HepG2 (cell line): ENCODE measurements at regions of chr14 and their contacts with region 1.

Region 1: DNA sequence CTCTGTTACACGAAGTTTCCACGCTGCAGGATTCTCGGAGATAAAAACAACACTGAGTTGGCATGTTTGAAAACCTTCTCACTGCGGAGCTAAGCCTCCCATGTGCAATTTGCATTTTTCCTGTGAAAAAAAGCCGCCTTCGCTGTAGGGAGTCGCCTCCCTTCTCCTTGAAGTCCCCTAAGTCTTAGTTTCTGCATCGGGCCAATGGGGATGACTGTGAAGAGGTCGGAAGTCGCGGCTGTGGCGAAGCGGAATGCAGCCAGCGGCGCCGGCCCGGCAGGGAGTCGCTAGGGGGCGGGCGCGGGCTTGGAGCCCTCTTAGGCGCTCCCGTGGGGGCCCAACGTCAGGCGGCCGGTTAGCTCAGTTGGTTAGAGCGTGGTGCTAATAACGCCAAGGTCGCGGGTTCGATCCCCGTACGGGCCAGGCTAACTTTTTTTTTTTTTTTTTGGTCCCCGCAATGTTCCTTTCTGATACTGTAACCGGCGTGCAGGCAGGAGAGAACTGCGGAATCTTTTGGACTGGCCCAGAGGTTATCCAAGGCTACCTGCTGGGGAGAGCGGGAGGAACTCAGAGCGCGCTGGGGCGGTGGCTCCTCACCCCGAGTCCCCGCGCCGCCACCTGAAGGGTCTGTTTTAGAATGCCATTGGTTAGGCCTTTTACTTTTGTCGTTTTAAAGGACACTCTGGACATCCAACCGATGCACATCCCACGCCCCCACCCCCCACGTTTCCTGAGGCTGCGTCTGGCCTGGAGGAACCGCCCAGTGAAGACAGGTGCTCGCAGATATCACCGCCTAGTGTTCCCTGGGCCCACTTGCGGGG is 2.6 kb upstream of the ZNF839 start:
- DNase-seq: peak; percentile 83
- ATAC-seq: peak; percentile 52
- H3K4me3 ChIP-seq: peak overlapping the region; percentile 77 to 97 (median 86)
- H3K27ac ChIP-seq: peak overlapping the region; percentile 80
- H3K4me1 ChIP-seq: peaks cover 55% of the 10 kb centered on the region
- H3K27me3 ChIP-seq: no peaks in the 10 kb centered on the region; a peak in 1 of 5 replicates
- CTCF ChIP-seq: peak; percentile 93
- EP300 ChIP-seq: peak; percentile 18 to 54; a peak in 2 of 4 replicates
- POLR2A ChIP-seq: peak in 1 of 2 experiments; percentile 25; a peak in 2 of 4 replicates
- RAD21 ChIP-seq: 0 out of 2 replicates have a peak, but pooled peaks have one; percentile 26

Region 2: GRCh38 chr14:101964297-101965144 is 352.4 kb before region 1 on chr14 and contains the start of gene DYNC1H1:
- CTCF ChIA-PET with region 1: no interaction called
- POLR2A ChIA-PET with region 1: no interaction called
- in situ Hi-C with region 1: loop called (anchors 5 kb)
- intact Hi-C with region 1: loop called (anchors 5 kb)
- DNase-seq: peak; percentile 83
- ATAC-seq: peak; percentile 74
- H3K4me3 ChIP-seq: peak within 1 kb of the TSS; percentile 96 to 100 (median 99)
- H3K27ac ChIP-seq: peak within 1 kb of the TSS; percentile 90
- H3K4me1 ChIP-seq: peaks cover 75% of the 10 kb centered on the region
- H3K27me3 ChIP-seq: no peaks in the 10 kb centered on the region; a peak in 1 of 5 replicates
- CTCF ChIP-seq: no peak
- EP300 ChIP-seq: no peak
- POLR2A ChIP-seq: peak; percentile 96 to 97
- RAD21 ChIP-seq: peak; percentile 44; the same call in 1 of the 2 replicates
- total RNA-seq, gene DYNC1H1: 239 and 386 TPM in 2 replicates

Region 3: DNA sequence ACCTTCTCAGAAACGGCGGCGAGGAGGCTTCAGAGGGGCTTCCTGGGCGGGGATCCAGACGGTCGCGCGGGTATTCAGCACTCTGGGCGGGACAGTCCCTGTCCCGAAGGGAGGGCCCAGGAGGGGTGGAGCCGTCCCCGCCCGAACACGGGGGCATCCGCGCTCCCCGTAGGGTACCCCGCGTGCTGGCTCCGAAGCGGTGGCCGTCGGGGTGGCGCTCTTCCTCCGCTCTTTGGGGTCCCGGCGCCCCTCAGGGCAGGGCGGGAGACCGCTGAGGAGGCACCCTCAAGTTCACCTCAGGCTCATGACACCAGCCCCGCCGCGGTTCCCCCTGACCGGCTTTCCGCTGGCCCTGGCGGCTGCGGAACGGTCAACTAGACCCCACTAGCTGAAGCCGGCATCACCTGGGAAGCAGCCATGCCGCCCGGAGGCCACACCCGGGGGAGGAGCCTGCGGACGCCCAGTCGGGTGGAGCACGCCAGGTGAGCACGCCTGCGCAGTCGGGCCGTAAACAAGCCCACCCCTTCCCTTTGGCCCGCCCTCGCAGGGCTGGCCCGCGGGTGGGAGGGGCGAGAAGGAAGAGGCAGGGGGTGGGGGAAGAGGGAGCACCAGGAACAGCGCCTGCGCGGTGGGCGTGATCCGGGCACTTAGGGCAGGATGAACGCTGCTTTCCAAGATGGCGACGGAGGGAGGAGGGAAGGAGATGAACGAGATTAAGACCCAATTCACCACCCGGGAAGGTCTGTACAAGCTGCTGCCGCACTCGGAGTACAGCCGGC is 177.5 kb before region 1 on chr14 and contains the start of gene WDR20:
- CTCF ChIA-PET with region 1: no interaction called
- POLR2A ChIA-PET with region 1: interaction called, 3 read pairs
- in situ Hi-C with region 1: no loop called
- intact Hi-C with region 1: loop called (anchors 5 kb)
- DNase-seq: peak; percentile 95
- ATAC-seq: peak; percentile 94
- H3K4me3 ChIP-seq: peak within 1 kb of the TSS; percentile 95 to 99 (median 99)
- H3K27ac ChIP-seq: peak within 1 kb of the TSS; percentile 78
- H3K4me1 ChIP-seq: peaks cover 15% of the 10 kb centered on the region
- H3K27me3 ChIP-seq: no peaks in the 10 kb centered on the region; a peak in 1 of 5 replicates
- CTCF ChIP-seq: peak; percentile 70
- EP300 ChIP-seq: no peak
- POLR2A ChIP-seq: peak; percentile 71 to 78
- RAD21 ChIP-seq: peak; percentile 14; the same call in 1 of the 2 replicates
- total RNA-seq, gene WDR20: 23.2 and 30.5 TPM in 2 replicates

Region 4: DNA sequence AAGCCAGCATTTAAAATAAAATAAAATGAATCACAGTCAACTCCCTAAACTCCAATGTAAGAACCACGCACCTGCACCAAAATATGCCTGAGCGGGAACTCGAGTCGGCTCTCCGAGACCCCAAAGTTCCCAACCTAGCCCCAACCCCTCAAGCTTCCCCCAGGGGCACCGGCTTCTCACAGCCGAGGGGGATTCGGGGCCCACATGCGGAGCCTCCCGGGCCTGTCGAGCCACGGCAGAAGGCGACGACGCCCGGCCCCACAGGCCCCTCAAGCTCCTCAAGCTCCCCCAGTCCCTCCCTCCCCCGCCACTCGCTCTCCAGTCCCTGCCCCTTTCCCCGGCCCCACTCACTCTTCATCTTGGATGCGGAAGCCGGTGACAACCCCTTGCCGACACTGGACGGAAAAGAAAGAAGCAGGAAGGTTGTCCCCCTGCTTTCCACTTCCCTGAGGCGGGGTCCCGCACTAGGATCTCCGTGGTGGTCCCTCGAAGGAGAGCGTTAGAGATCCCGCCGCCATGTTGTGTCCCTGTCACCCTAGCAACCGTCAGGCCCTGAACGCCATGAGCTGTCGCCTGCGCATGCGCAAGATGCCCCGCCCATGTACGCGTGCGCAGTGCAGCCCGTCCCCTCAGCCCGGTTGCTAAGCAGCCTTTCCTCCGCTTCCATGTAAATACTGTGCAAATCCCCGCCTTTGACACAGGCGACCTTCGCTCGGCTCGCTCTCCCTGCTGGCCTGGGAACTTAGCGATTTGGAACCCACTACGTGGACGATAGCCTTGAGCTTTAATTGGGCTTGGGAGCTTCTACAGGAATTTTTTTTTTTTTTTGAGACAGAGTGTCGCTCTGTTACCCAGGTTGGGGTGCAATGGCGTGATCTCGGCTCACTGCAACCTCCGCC is 12.1 kb before region 1 on chr14 and contains the start of gene MOK:
- CTCF ChIA-PET with region 1: no interaction called
- POLR2A ChIA-PET with region 1: interaction called, 14 read pairs
- in situ Hi-C with region 1: no loop called
- intact Hi-C with region 1: no loop called
- DNase-seq: peak; percentile 96
- ATAC-seq: peak; percentile 96
- H3K4me3 ChIP-seq: peak within 1 kb of the TSS; percentile 64 to 81 (median 76)
- H3K27ac ChIP-seq: peak within 1 kb of the TSS; percentile 94
- H3K4me1 ChIP-seq: peaks cover 31% of the 10 kb centered on the region
- H3K27me3 ChIP-seq: no peaks in the 10 kb centered on the region
- CTCF ChIP-seq: no peak; the same call in 1 of the 2 replicates
- EP300 ChIP-seq: no peak; a peak in 1 of 4 replicates
- POLR2A ChIP-seq: 0 out of 4 replicates have a peak, but pooled peaks of 1 of the 2 experiments have one; percentile 31
- RAD21 ChIP-seq: no peak
- total RNA-seq, gene MOK: 11.8 and 15.3 TPM in 2 replicates

Region 5: DNA sequence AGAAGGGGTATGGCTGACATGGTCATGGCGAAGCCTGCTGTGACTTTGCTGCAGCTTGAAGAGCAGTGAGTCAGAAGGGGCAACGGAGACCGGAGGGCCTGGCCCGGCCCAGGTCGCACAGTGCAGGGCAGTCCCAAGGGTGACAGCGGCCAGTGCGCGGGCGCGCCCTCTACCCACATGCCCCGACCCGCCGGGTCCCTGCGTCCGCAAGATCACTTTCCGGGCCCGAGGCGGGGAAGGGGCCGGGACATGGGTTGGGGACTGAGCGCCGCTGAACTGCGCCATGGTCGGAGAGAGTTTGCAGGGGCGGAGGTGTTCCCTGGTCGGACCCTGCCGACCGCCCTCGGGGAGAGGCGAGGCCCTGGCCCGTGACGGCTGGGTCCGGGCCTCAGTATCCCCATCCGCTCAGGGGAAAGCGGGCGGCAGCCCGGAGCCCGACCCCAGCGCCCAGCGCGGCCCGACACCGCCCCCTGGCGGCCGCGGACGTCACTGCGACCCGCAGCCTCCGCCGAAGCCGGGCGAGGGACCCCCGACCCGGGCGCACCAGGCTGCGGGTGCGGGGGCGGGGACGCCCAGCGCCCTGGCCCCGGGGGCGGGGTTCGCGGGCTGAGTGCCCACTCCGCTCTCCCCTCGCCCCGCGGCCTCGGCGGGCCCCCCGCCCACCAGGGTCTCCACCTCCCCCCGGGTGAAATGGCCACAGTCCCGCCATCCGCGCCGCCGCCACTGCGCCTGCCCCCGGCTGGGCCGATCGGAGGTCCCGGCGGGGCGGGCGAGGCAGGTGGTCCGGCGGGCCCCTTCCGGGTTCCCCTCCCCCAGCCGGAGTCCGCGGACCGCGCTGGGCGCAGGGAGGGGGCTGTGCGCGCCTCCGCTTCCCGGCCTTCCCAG is 199.8 kb after region 1 on chr14:
- CTCF ChIA-PET with region 1: no interaction called
- POLR2A ChIA-PET with region 1: no interaction called
- in situ Hi-C with region 1: no loop called
- intact Hi-C with region 1: loop called (anchors 5 kb)
- DNase-seq: peak; percentile 44
- ATAC-seq: peak; percentile 84
- H3K4me3 ChIP-seq: peak overlapping the region; percentile 53 to 80 (median 59)
- H3K27ac ChIP-seq: no peak overlapping the region
- H3K4me1 ChIP-seq: peaks cover 51% of the 10 kb centered on the region
- H3K27me3 ChIP-seq: no peaks in the 10 kb centered on the region
- CTCF ChIP-seq: peak; percentile 64
- EP300 ChIP-seq: no peak
- POLR2A ChIP-seq: no peak
- RAD21 ChIP-seq: peak; percentile 99